Naive thymus-derived CD4-positive, alpha-beta T cell (primary cell): ENCODE measurements at regions of chr9 and their contacts with region 1.

Region 1: GRCh38 chr9:97632985-97633858 is at the starts of genes NCBP1 and TSTD2:
- DNase-seq: peak; percentile 89 to 97 (median 96)
- ATAC-seq: peak; percentile 91
- H3K4me3 ChIP-seq: peak within 1 kb of the TSS; percentile 78
- H3K4me3 Mint-ChIP-seq: peak within 1 kb of the TSS; percentile 86 to 100 (median 96)
- H3K27ac ChIP-seq: peak within 1 kb of the TSS; percentile 88
- H3K27ac Mint-ChIP-seq: peak within 1 kb of the TSS; percentile 98 to 100 (median 99)
- H3K4me1 ChIP-seq: peaks cover 37 to 43% of the 10 kb centered on the region in 2 donors
- H3K4me1 Mint-ChIP-seq: peaks cover 41 to 82% (median 65%) of the 10 kb centered on the region in 7 donors
- H3K27me3 ChIP-seq: no peaks in the 10 kb centered on the region
- H3K27me3 Mint-ChIP-seq: no peaks in the 10 kb centered on the region
- total RNA-seq, gene NCBP1: 33.8 to 42.2 (median 40.6) TPM
- total RNA-seq, gene TSTD2: 15.2 to 23.3 (median 18.6) TPM

Region 2: GRCh38 chr9:96418074-96418809 is 1215.0 kb before region 1 on chr9 and contains the start of gene ZNF367:
- CTCF ChIA-PET with region 1: no interaction called
- POLR2A ChIA-PET with region 1: no interaction called
- intact Hi-C with region 1: loop called in 1 of 2 experiments (anchors 2 kb)
- DNase-seq: peak; percentile 75 to 94 (median 82)
- ATAC-seq: peak; percentile 85
- H3K4me3 ChIP-seq: peak within 1 kb of the TSS; percentile 94
- H3K4me3 Mint-ChIP-seq: peak within 1 kb of the TSS; percentile 88 to 98 (median 92)
- H3K27ac ChIP-seq: peak within 1 kb of the TSS; percentile 98
- H3K27ac Mint-ChIP-seq: peak within 1 kb of the TSS; percentile 92 to 98 (median 96)
- H3K4me1 ChIP-seq: peaks cover 19 to 31% of the 10 kb centered on the region in 2 donors
- H3K4me1 Mint-ChIP-seq: peaks cover 21 to 39% (median 31%) of the 10 kb centered on the region in 7 donors
- H3K27me3 ChIP-seq: no peaks in the 10 kb centered on the region
- H3K27me3 Mint-ChIP-seq: no peaks in the 10 kb centered on the region
- total RNA-seq, gene ZNF367: 3.8 to 22.9 (median 5.5) TPM

Region 3: DNA sequence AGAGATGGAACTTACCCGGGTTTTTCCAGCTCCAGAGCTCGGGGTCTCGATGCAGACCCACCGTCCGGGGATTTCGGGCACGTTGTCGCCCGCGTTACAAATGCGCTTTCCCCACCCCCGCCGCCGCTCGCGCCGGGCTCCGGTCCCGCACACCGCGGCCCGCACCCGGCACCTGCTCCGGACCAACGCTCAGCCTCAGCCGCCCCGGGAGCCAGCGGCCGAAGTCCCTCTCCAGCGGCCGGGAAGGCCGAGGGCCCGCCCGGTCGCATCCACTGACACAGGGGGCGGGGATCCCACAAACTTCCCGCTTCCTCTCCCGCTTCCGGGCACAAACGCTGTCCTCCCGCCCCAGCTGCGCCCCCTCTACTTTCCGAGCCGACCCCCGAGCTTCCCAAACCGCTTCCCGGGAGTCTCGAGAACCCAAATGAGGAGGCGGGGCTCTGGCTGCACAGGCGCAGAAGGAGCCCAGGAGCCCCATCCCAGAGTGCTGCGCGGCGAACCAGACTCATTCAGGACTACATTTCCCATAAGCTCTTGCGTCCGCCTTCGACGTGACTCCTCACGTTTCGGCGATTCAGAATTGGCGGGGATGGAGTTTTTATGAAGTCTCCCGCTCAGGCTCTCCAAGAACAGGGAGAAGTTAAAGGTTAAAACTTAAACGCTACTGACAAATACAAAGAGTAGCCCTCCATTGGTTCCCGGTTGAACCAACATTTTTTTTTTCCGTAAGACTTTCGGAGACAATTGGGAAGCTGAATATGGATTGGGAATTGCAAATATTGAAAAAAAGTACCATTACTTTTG is 778.9 kb before region 1 on chr9 and contains the start of gene ZNF782:
- CTCF ChIA-PET with region 1: no interaction called
- POLR2A ChIA-PET with region 1: interaction called, 6 read pairs
- intact Hi-C with region 1: loop called (anchors 1 kb)
- DNase-seq: peak; percentile 66 to 84 (median 77)
- ATAC-seq: peak; percentile 94
- H3K4me3 ChIP-seq: peak within 1 kb of the TSS; percentile 89
- H3K4me3 Mint-ChIP-seq: peak within 1 kb of the TSS; percentile 90 to 100 (median 100)
- H3K27ac ChIP-seq: peak within 1 kb of the TSS; percentile 83
- H3K27ac Mint-ChIP-seq: peak within 1 kb of the TSS; percentile 89 to 100 (median 97)
- H3K4me1 ChIP-seq: peaks cover 15 to 18% of the 10 kb centered on the region in 2 donors
- H3K4me1 Mint-ChIP-seq: peaks cover 28 to 54% (median 42%) of the 10 kb centered on the region in 7 donors
- H3K27me3 ChIP-seq: no peaks in the 10 kb centered on the region
- H3K27me3 Mint-ChIP-seq: peaks cover 0 to 22% (median 0%) of the 10 kb centered on the region in 5 donors
- total RNA-seq, gene ZNF782: 6.2 to 12.4 (median 8.2) TPM

Region 4: GRCh38 chr9:97615439-97616072 is 17.7 kb before region 1 on chr9:
- CTCF ChIA-PET with region 1: interaction called, 13 read pairs
- POLR2A ChIA-PET with region 1: interaction called, 8 read pairs
- intact Hi-C with region 1: loop called in 1 of 2 experiments (anchors 1 kb)
- DNase-seq: peak in 8 of 9 donors; percentile 29 to 61 (median 52)
- ATAC-seq: peak; percentile 76
- H3K4me3 ChIP-seq: no peak overlapping the region
- H3K4me3 Mint-ChIP-seq: no peak overlapping the region
- H3K27ac ChIP-seq: no peak overlapping the region
- H3K27ac Mint-ChIP-seq: peak overlapping the region in 1 of 9 donors; percentile 37
- H3K4me1 ChIP-seq: no peaks in the 10 kb centered on the region
- H3K4me1 Mint-ChIP-seq: peaks cover 0 to 15% (median 0%) of the 10 kb centered on the region in 7 donors
- H3K27me3 ChIP-seq: no peaks in the 10 kb centered on the region
- H3K27me3 Mint-ChIP-seq: no peaks in the 10 kb centered on the region

Region 5: DNA sequence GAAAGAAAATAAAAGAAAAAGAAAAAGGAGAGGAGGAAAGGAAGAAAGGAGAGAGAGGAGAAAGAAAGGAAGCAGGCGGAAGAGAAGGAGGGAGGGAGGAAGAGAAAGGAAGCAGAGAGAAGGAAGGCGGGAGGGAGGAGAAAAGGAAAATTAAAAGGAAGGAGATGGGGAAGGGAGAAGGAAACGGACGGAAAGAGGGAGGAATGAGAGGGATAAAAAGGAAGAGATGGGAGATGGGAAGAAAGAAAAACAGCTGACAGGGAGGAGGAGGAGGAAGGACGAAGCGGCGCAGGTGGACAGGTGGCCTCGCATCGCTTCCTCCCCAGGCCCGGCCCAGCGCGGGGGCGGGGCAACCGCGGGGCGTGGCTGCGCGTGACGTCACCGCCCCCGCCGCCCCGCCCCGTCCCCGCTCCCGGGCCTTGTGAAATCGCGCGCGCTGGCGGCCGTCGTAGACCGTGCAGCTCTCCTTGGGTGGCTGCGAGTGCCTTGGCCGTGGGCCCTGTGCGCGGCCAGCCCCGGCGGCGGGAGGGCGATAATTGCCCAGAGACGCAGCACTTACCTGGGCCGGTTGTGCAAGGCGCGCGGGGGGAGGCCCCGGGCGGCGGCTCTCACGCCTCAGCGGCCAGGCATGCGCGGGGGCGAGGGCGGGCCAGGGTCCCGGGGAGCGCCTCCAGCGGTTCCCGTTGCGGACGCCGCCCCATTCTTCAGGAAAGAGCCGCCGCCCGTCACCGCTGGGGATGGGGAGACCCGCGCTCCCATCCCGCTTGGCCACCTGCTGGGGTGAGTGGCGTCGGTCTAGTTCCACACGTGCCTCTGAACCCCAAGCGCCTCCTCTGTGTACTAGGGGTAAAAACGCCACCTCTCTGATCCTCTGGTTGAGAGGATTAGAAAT is 170.2 kb after region 1 on chr9:
- CTCF ChIA-PET with region 1: no interaction called
- POLR2A ChIA-PET with region 1: no interaction called
- intact Hi-C with region 1: loop called in 1 of 2 experiments (anchors 5 kb)
- DNase-seq: peak; percentile 59 to 77 (median 75)
- ATAC-seq: peak; percentile 98
- H3K4me3 ChIP-seq: peak overlapping the region; percentile 72
- H3K4me3 Mint-ChIP-seq: peak overlapping the region; percentile 78 to 92 (median 87)
- H3K27ac ChIP-seq: peak overlapping the region; percentile 45
- H3K27ac Mint-ChIP-seq: peak overlapping the region in 7 of 9 donors; percentile 28 to 86 (median 80)
- H3K4me1 ChIP-seq: no peaks in the 10 kb centered on the region
- H3K4me1 Mint-ChIP-seq: peaks cover 0 to 13% (median 9%) of the 10 kb centered on the region in 7 donors
- H3K27me3 ChIP-seq: no peaks in the 10 kb centered on the region
- H3K27me3 Mint-ChIP-seq: peaks cover 4 to 51% (median 17%) of the 10 kb centered on the region in 5 donors

Region 6: DNA sequence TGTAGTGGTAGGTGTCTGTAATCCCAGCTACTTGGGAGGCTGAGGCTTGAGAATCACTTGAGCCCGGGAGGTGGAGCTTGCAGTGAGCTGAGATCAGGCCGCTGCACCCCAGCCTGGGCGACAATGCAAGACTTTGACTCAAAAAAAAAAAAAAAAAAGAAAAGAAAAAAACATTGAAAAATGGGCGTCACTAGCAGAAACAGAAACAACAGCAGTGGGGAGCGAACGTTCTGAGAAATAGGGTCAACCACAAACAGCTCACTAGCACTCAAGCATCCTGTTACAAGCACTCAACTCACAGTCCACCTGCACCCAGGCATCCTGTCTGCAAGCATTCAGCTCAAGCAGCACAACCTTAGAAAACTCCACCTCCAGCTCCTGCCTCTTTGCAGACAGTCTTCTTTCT is 468.6 kb after region 1 on chr9:
- CTCF ChIA-PET with region 1: no interaction called
- POLR2A ChIA-PET with region 1: no interaction called
- intact Hi-C with region 1: loop called (anchors 1 to 5 kb)
- DNase-seq: peak; percentile 35 to 96 (median 92)
- ATAC-seq: peak; percentile 99
- H3K4me3 ChIP-seq: peak overlapping the region; percentile 31
- H3K4me3 Mint-ChIP-seq: peak overlapping the region; percentile 66 to 86 (median 77)
- H3K27ac ChIP-seq: peak overlapping the region; percentile 78
- H3K27ac Mint-ChIP-seq: peak overlapping the region; percentile 87 to 99 (median 95)
- H3K4me1 ChIP-seq: peaks cover 88 to 91% of the 10 kb centered on the region in 2 donors
- H3K4me1 Mint-ChIP-seq: peaks cover 52 to 97% (median 88%) of the 10 kb centered on the region in 7 donors
- H3K27me3 ChIP-seq: no peaks in the 10 kb centered on the region
- H3K27me3 Mint-ChIP-seq: no peaks in the 10 kb centered on the region